ENCODE measurements at regions of chr14 and their contacts with region 1.

Region 1: GRCh38 chr14:73568381-73568781 is 632 bp upstream of the ACOT2 start:
- DNase-seq: no peak
- ATAC-seq: no peak
- H3K4me3 ChIP-seq: peak overlapping the region; percentile 73
- H3K4me3 Mint-ChIP-seq: peak overlapping the region; percentile 92 to 97 (median 94)
- H3K27ac ChIP-seq: peak overlapping the region; percentile 77
- H3K27ac Mint-ChIP-seq: peak overlapping the region; percentile 92 to 98 (median 95)
- H3K4me1 ChIP-seq: peaks cover 21% of the 10 kb centered on the region in 2 donors
- H3K4me1 Mint-ChIP-seq: peaks cover 29 to 52% (median 44%) of the 10 kb centered on the region in 7 donors
- H3K27me3 ChIP-seq: no peaks in the 10 kb centered on the region
- H3K27me3 Mint-ChIP-seq: no peaks in the 10 kb centered on the region

Region 2: GRCh38 chr14:73295198-73295796 is 273.1 kb before region 1 on chr14:
- CTCF ChIA-PET with region 1: no interaction called
- POLR2A ChIA-PET with region 1: no interaction called
- intact Hi-C with region 1: loop called in 1 of 2 experiments (anchors 1 kb)
- DNase-seq: peak in 5 of 9 donors; percentile 27 to 53 (median 43)
- ATAC-seq: peak; percentile 70
- H3K4me3 ChIP-seq: no peak overlapping the region
- H3K4me3 Mint-ChIP-seq: no peak overlapping the region
- H3K27ac ChIP-seq: no peak overlapping the region
- H3K27ac Mint-ChIP-seq: no peak overlapping the region
- H3K4me1 ChIP-seq: no peaks in the 10 kb centered on the region
- H3K4me1 Mint-ChIP-seq: peaks cover 0 to 18% (median 0%) of the 10 kb centered on the region in 7 donors
- H3K27me3 ChIP-seq: no peaks in the 10 kb centered on the region
- H3K27me3 Mint-ChIP-seq: no peaks in the 10 kb centered on the region

Region 3: GRCh38 chr14:73526569-73526968 is 41.8 kb before region 1 on chr14:
- CTCF ChIA-PET with region 1: no interaction called
- POLR2A ChIA-PET with region 1: interaction called, 3 read pairs
- intact Hi-C with region 1: loop called in 1 of 2 experiments (anchors 5 kb)
- DNase-seq: no peak
- ATAC-seq: no peak
- H3K4me3 ChIP-seq: no peak overlapping the region
- H3K4me3 Mint-ChIP-seq: no peak overlapping the region
- H3K27ac ChIP-seq: no peak overlapping the region
- H3K27ac Mint-ChIP-seq: no peak overlapping the region
- H3K4me1 ChIP-seq: no peaks in the 10 kb centered on the region
- H3K4me1 Mint-ChIP-seq: no peaks in the 10 kb centered on the region
- H3K27me3 ChIP-seq: no peaks in the 10 kb centered on the region
- H3K27me3 Mint-ChIP-seq: peaks cover 0 to 5% (median 0%) of the 10 kb centered on the region in 5 donors

Region 4: DNA sequence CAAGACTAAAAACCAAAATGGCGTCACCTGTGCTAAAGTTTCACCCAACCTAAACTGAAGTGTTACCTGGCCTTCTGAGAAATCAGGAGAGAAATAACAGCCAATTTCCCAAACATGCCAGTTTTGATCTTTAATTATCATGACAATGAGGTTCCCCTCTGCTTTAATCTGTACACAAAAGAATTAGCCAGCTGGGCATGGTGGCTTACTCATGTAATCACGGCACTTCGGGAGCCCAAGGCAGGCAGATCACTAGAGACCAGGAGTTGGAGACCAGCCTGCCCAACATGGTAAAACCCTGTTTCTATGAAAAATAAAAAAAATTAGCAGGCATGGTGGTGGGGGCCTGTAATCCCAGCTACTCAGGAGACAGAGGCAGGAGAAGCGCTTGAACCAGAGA is 14.5 kb before region 1 on chr14:
- CTCF ChIA-PET with region 1: no interaction called
- POLR2A ChIA-PET with region 1: no interaction called
- intact Hi-C with region 1: no loop called
- DNase-seq: no peak
- ATAC-seq: no peak
- H3K4me3 ChIP-seq: no peak overlapping the region
- H3K4me3 Mint-ChIP-seq: no peak overlapping the region
- H3K27ac ChIP-seq: no peak overlapping the region
- H3K27ac Mint-ChIP-seq: no peak overlapping the region
- H3K4me1 ChIP-seq: no peaks in the 10 kb centered on the region
- H3K4me1 Mint-ChIP-seq: no peaks in the 10 kb centered on the region
- H3K27me3 ChIP-seq: no peaks in the 10 kb centered on the region
- H3K27me3 Mint-ChIP-seq: no peaks in the 10 kb centered on the region

Region 5: GRCh38 chr14:73613046-73613383 is 44.6 kb after region 1 on chr14:
- CTCF ChIA-PET with region 1: no interaction called
- POLR2A ChIA-PET with region 1: interaction called, 20 read pairs
- intact Hi-C with region 1: loop called (anchors 1 kb)
- DNase-seq: no peak
- ATAC-seq: no peak
- H3K4me3 ChIP-seq: peak overlapping the region; percentile 73
- H3K4me3 Mint-ChIP-seq: peak overlapping the region; percentile 82 to 90 (median 88)
- H3K27ac ChIP-seq: peak overlapping the region; percentile 65
- H3K27ac Mint-ChIP-seq: peak overlapping the region; percentile 72 to 90 (median 84)
- H3K4me1 ChIP-seq: no peaks in the 10 kb centered on the region
- H3K4me1 Mint-ChIP-seq: peaks cover 0 to 14% (median 0%) of the 10 kb centered on the region in 7 donors
- H3K27me3 ChIP-seq: no peaks in the 10 kb centered on the region
- H3K27me3 Mint-ChIP-seq: peaks cover 0 to 10% (median 0%) of the 10 kb centered on the region in 5 donors

Region 6: GRCh38 chr14:73644531-73645247 is 76.3 kb after region 1 on chr14 and contains the start of gene DNAL1:
- CTCF ChIA-PET with region 1: no interaction called
- POLR2A ChIA-PET with region 1: no interaction called
- intact Hi-C with region 1: loop called (anchors 1 kb)
- DNase-seq: peak; percentile 80 to 93 (median 86)
- ATAC-seq: peak; percentile 99
- H3K4me3 ChIP-seq: peak within 1 kb of the TSS; percentile 92
- H3K4me3 Mint-ChIP-seq: peak within 1 kb of the TSS; percentile 89 to 99 (median 94)
- H3K27ac ChIP-seq: peak within 1 kb of the TSS; percentile 80
- H3K27ac Mint-ChIP-seq: peak within 1 kb of the TSS; percentile 86 to 98 (median 93)
- H3K4me1 ChIP-seq: peaks cover 7 to 9% of the 10 kb centered on the region in 2 donors
- H3K4me1 Mint-ChIP-seq: peaks cover 8 to 20% (median 16%) of the 10 kb centered on the region in 7 donors
- H3K27me3 ChIP-seq: no peaks in the 10 kb centered on the region
- H3K27me3 Mint-ChIP-seq: no peaks in the 10 kb centered on the region
- total RNA-seq, gene DNAL1: 3.6 to 8.4 (median 6.5) TPM